Ascending aorta (tissue), 2 donors: ENCODE measurements at regions of chr3 and their contacts with region 1.

Region 1: DNA sequence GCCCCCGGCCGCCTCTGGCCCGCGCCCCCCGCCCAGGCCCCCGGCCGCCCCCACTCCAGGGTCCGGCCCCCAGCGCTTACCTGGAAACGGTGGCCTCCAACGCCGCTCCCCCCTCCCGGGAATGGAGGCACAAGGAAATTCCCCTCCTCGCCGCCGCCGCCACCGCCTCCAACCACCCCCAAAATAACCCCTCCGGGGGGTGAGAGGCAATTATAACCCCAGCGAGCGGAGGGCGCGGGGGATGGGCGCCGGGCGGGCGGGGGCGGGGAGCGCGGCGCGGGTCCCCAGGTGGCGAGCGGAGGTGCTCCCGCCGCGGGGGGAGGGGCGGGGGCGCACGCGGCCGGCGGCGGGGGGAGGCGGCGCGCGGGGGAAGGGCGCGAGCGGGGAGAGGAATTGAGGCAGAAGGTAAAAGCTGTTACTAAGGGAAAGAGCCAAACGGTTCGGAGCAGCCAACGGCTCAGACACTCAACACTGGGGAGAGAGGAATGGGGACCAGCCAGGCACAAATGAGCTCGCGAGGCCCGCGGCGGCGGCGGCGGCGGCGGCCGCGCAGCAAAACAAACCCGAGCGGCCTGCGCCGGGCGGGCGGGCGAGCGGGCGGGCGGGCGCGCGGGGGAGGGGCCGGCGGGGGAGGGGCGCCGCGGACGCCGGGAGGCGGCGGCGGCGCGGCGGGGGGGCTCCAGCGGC is at the start of gene TBL1XR1:
- DNase-seq: peak; percentile 73 to 96
- H3K4me3 ChIP-seq: peak within 1 kb of the TSS; percentile 97
- H3K27ac ChIP-seq: peak within 1 kb of the TSS; percentile 96 to 98
- H3K4me1 ChIP-seq: peaks cover 0 to 12% of the 10 kb centered on the region in 2 donors
- H3K27me3 ChIP-seq: no peaks in the 10 kb centered on the region
- CTCF ChIP-seq: no peak
- total RNA-seq, gene TBL1XR1: 52.0 TPM

Region 2: GRCh38 chr3:177144923-177145780 is 52.0 kb before region 1 on chr3:
- intact Hi-C with region 1: loop called (anchors 5 kb)
- DNase-seq: no peak
- H3K4me3 ChIP-seq: no peak overlapping the region
- H3K27ac ChIP-seq: no peak overlapping the region
- H3K4me1 ChIP-seq: peaks cover 12 to 17% of the 10 kb centered on the region in 2 donors
- H3K27me3 ChIP-seq: no peaks in the 10 kb centered on the region
- CTCF ChIP-seq: no peak

Region 3: DNA sequence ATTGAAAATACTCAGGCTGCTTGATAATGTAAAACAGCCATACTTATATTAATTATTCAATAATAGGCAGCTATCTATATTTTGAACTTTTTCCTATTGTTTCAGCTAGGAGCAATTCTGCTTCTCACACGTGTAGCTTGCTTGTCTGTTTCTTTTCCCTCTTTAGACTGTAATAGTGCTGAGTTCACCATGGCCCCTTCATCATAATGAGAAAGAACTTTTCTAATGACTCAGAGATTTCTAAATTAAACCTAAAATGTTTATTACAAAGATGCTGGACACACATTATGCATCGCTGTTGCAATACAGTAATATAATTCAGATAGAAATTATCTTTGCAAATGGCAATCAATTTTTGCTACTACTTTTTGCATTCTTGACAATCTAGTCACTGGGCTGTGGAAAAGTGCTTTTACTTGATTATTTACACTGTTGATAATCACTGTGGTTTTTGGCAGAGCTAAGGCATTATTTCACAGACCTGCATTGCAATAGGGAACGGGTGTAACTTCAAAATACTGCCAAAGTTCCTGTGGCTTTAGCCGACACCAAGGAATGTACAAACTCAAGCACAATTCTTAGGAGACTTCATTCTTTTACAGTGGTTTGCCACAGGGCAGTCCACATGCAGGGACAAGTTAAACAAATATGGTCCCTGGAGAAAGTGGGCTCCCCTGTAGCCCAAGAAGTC is 281.1 kb after region 1 on chr3:
- intact Hi-C with region 1: loop called (anchors 2 kb)
- DNase-seq: peak in 1 of 2 donors; percentile 79
- H3K4me3 ChIP-seq: no peak overlapping the region
- H3K27ac ChIP-seq: peak overlapping the region; percentile 69 to 75
- H3K4me1 ChIP-seq: peaks cover 0 to 25% of the 10 kb centered on the region in 2 donors
- H3K27me3 ChIP-seq: no peaks in the 10 kb centered on the region
- CTCF ChIP-seq: no peak

Region 4: GRCh38 chr3:177906126-177906511 is 708.9 kb after region 1 on chr3:
- intact Hi-C with region 1: loop called (anchors 10 kb)
- DNase-seq: no peak
- H3K4me3 ChIP-seq: no peak overlapping the region
- H3K27ac ChIP-seq: peak overlapping the region; percentile 51 to 62
- H3K4me1 ChIP-seq: peaks cover 5 to 29% of the 10 kb centered on the region in 2 donors
- H3K27me3 ChIP-seq: no peaks in the 10 kb centered on the region
- CTCF ChIP-seq: peak in 2 of 3 experiments; percentile 5 to 18

Region 5: DNA sequence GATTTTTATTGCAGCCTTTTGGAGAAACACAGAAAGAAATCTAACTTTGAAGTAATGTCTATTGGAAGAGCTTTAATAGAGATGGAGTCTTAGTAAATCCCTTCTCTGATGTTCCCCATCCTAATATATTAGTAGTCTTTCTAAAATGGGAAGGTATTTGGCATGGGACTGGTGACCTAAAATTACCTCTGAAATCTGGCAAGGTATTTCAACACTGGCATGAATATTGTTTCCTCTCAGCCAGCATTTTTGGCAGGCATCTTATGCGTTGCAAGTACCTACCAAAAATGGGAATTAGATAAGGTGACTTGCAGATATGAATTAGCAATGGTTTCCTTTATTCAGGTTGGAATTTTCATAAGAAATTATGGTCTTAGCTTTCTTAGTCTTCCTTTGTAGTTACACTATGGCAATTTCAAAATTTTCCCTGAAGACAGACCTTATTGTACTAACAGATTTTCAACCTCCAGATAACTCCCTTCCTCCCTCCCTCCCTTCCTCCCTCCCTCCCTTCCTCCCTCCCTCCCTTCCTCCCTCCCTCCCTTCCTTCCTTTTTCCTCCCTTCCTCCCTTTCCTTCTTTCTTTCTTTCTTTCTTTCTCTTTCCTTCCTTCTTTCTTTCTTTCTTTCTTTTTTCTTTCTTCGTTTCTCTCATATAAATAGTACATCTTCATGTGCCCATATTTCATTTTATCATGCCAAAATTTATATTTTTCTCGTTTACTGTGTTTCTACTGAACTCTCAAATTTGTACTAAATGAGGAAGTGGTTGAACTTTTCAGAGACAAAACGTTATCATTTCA is 1170.8 kb after region 1 on chr3:
- intact Hi-C with region 1: loop called (anchors 5 kb)
- DNase-seq: peak in 1 of 2 donors; percentile 70
- H3K4me3 ChIP-seq: no peak overlapping the region
- H3K27ac ChIP-seq: peak overlapping the region; percentile 61 to 62
- H3K4me1 ChIP-seq: peaks cover 0 to 5% of the 10 kb centered on the region in 2 donors
- H3K27me3 ChIP-seq: no peaks in the 10 kb centered on the region
- CTCF ChIP-seq: no peak